Left cardiac atrium (tissue), 4 donors: ENCODE measurements at regions of chr9 and their contacts with region 1.

Region 1: DNA sequence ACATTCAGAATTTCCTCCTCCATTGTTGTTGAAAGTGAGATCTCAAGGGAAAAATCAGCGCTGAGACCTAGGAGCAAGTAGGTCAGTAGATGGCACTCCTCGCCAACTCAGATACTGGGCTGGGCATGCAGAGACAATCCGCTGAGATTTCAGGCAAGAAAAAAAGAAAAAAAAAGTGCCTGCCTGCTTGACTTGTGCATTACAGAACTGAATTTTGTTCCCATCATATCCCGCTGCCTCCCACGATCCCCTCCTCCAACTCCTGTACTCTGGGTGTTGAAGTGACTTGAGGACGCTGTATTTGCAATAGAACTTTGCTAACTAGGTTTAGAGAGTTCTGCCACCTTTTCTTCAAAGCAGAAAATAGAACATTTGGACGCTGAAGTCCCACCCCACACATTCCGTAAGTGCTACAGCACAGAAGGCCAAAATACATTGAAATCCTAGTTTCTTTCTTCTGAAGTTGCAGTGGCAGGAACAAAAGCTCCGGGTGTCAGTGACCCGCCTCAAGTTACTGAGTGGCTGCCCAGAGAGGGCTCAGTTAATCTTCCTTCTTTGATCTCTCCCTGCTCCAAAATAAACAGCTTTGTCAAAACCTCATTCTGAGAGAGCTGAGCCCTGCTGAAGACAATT is 265.8 kb downstream of the MLLT3 start:
- DNase-seq: peak; percentile 70
- ATAC-seq: peak; percentile 94

Region 2: GRCh38 chr9:19925817-19926503 is 430.6 kb before region 1 on chr9:
- intact Hi-C with region 1: loop called in 1 of 2 experiments (anchors 5 kb)
- DNase-seq: peak; percentile 60
- ATAC-seq: peak; percentile 89 to 97

Region 3: GRCh38 chr9:20054734-20055133 is 301.8 kb before region 1 on chr9:
- intact Hi-C with region 1: no loop called
- DNase-seq: no peak
- ATAC-seq: no peak

Region 4: DNA sequence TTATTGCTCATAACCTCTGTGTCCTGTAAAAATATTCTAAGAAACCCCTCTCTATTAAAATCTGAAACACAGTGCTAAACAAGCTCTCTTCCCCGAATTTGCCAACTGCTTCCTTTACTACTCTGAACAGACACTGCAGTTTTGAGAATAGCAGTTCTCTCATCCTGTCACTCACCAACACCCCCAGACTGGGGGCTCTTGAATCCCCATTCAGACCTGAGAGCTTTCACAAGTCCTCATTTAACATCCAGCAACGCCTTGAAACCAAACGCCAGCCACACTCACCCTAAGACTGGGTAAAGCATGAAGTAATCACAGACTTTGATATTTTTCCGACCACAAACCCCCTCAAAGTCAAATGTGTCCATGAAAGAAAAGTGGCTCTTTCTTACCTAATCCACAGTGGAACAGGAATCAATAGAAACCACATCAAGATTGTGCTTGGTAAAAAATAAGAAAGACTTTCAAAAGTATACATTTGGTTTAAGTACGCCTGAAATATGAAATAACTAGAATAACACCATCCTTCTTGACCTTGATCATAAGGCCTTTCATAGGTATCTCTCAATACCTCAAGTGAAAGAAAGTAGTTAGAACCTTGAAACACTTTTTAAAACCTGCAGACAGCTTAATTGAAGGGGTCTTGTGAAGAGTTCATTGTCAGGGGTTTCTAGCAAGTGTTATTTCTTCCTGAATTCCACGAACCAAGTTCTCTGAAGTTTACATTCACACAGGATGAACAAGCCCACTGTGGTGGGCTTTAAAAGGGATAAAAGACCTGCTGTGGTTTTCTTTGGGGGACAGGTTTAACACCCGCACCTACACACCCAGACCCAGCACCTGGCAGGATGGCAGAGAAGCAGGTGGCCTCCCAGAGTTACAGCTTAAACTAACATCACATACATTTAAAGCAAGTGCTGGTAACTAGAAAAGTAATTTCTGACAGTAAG is 146.9 kb before region 1 on chr9:
- intact Hi-C with region 1: no loop called
- DNase-seq: no peak
- ATAC-seq: no peak

Region 5: DNA sequence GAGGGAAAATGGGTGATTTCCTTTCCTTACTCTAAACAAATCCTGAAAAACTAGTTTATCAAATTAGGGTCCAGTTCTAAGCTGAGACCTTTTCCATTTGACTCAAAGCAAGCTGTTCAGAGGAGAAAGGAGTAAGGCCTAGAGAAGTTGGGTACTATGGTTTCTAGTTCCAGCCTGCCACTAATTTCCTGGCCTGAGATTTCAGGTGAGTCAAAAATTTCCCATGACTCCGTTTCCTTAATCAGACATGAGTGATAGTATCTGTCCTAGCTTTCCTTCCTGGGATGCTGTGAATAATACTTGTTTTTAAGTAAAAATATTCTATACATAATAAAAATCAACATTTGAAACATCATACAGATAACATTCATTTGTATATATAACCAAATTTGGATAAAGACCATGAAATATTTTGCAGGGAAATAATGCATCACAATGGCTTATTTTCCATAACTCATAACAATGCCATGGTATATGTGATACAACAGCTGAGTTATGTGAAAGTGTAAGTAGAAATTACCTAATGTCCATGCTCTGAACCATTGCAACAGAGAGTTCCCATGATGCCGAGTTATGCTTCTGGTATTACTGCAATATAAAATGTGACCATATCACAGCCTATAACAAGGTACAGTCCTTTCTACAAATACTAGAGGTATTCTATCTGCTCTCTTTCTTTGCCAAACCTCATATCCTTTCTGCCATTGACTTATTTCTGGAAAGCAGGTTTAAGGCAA is 123.1 kb after region 1 on chr9:
- intact Hi-C with region 1: loop called in 1 of 2 experiments (anchors 10 kb)
- DNase-seq: no peak
- ATAC-seq: no peak

Region 6: GRCh38 chr9:20622330-20623020 is 266.0 kb after region 1 on chr9 and contains the start of gene MLLT3:
- intact Hi-C with region 1: loop called (anchors 5 to 10 kb)
- DNase-seq: peak; percentile 97
- ATAC-seq: peak; percentile 95 to 98
- total RNA-seq, gene MLLT3: 5.3 to 10.2 TPM

Region 7: GRCh38 chr9:20941174-20941690 is 584.7 kb after region 1 on chr9:
- intact Hi-C with region 1: loop called (anchors 2 to 10 kb)
- DNase-seq: peak; percentile 36
- ATAC-seq: peak; percentile 84 to 92

Region 8: DNA sequence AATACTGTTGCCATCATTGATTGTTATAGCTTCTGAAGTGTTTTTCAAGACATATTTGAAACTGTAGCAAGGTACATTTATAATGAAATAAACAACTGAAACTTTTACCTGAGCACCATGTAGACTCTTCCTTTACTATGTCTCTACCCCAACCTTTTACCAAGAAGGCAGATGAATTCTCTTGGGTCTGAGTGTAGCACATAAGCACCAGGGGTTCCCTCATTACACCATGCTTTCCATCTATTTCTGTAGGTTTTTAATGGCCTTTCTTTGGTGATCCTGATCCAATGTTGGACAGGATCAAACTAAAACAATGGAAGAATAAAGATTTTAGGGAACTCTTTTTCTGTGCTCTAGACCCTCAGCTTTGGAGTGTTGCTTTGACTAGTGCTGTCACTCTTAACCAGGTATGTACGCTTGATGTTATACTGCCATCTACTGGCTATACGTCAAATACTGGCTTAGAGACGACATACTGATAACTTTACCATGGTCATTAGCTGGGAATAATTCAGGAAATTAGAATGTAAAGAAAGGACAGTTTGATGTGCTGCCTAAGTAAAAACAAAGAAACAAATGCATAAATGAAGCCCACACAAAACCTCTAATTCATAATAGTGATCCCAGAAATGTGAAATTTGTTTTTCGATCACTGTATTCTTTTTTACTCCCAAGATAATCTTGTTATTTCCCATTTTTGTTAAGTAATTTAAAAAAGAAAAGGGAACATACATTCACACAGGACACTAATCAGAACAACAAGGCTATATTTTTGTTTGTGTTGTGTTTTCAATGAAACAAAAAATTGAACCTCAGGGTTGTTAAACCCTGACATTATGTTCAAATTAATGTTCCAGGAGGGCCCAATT is 754.4 kb after region 1 on chr9:
- intact Hi-C with region 1: loop called in 1 of 2 experiments (anchors 10 kb)
- DNase-seq: no peak
- ATAC-seq: peak; percentile 85 to 92